ENCODE measurements at regions of chr12 and their contacts with region 1.

Region 1: GRCh38 chr12:15789220-15790171 is at the start of gene EPS8:
- DNase-seq: no peak
- H3K4me3 ChIP-seq: peak within 1 kb of the TSS; percentile 81
- CTCF ChIP-seq: no peak

Region 2: DNA sequence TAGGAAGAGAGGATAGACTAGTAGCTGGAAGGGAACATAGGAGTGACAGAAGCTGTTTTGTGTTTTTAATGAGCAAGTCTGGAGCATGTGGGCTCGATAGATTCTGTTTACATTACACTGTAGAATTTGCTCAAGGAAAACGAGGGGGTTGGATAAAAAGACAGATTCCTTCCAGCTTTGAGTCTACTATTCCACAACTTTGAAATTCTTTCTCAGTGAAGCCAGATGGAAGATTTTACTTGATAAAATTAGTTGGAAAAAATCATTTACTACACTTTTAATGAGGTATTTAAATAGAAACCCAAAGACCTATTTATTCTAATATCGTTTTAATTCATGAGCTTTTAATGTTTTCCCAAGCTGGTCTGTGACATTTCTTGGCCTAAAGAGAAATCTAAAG is 19.2 kb after region 1 on chr12:
- CTCF ChIA-PET with region 1: interaction called, 4 read pairs
- POLR2A ChIA-PET with region 1: interaction called, 11 read pairs
- DNase-seq: peak; percentile 45
- H3K4me3 ChIP-seq: no peak overlapping the region
- CTCF ChIP-seq: no peak

Region 3: GRCh38 chr12:15883536-15883935 is 94.0 kb after region 1 on chr12:
- CTCF ChIA-PET with region 1: no interaction called
- POLR2A ChIA-PET with region 1: no interaction called
- DNase-seq: no peak
- H3K4me3 ChIP-seq: peak overlapping the region; percentile 91
- CTCF ChIP-seq: no peak